ENCODE measurements at regions of chr12 and their contacts with region 1.

Region 1: DNA sequence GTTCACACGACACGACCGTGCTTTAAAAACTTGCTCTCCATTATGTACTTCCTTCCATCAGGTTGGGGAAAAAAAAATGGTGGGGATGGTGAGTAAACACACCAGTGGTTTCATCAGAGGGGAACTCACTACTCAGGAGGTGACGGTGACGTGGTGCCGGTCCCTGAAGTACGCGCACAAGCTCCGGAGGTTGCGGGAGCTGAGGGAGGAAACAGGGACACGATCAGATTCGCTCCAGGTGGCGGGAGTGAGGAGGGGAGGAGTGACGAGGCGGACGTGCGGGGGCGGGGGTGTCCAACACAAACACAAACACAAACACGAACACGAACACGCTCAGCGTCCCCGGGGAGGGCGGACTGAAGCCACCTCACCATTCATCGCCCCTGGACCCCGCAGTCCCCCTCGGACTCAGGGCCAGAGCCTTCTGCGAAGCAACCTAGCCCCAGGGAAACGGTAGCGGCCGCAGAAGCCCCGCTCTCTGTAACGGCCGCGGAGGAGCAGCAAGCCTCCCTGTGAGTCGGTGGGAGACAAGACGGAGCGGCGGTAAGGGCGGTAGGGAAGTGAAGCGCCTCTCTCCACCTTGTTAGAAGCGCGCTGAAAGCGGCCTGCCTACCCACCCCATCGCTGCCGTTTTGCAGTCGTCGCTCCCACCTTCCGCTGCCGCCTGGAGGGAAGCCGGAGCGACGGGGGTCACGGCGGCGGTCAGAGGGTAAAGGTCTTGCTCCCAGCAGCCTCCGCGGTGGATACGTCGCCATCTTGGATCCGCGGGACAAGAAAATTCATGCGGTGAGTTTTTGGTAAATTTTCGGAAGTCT is at the start of gene CNOT2:
- DNase-seq: peak; percentile 82 to 95 (median 88)
- ATAC-seq: peak; percentile 80
- H3K4me3 ChIP-seq: peak within 1 kb of the TSS; percentile 88
- H3K4me3 Mint-ChIP-seq: peak within 1 kb of the TSS; percentile 99
- H3K27ac ChIP-seq: peak within 1 kb of the TSS; percentile 96 to 98
- H3K27ac Mint-ChIP-seq: peak within 1 kb of the TSS; percentile 97
- H3K4me1 ChIP-seq: peaks cover 12% of the 10 kb centered on the region
- H3K4me1 Mint-ChIP-seq: peaks cover 76% of the 10 kb centered on the region
- H3K27me3 ChIP-seq: no peaks in the 10 kb centered on the region
- H3K27me3 Mint-ChIP-seq: no peaks in the 10 kb centered on the region
- CTCF ChIP-seq: no peak
- total RNA-seq, gene CNOT2: 107 to 121 TPM

Region 2: GRCh38 chr12:69738351-69739286 is 504.3 kb before region 1 on chr12 and contains the start of gene RAB3IP:
- CTCF ChIA-PET with region 1: no interaction called
- POLR2A ChIA-PET with region 1: interaction called, 6 read pairs
- intact Hi-C with region 1: loop called in 1 of 2 experiments (anchors 2 kb)
- DNase-seq: peak; percentile 84 to 98 (median 92)
- ATAC-seq: peak; percentile 84
- H3K4me3 ChIP-seq: peak within 1 kb of the TSS; percentile 82
- H3K4me3 Mint-ChIP-seq: peak within 1 kb of the TSS; percentile 86
- H3K27ac ChIP-seq: peak within 1 kb of the TSS; percentile 48 to 68
- H3K27ac Mint-ChIP-seq: peak within 1 kb of the TSS; percentile 80
- H3K4me1 ChIP-seq: peaks cover 11% of the 10 kb centered on the region
- H3K4me1 Mint-ChIP-seq: peaks cover 27% of the 10 kb centered on the region
- H3K27me3 ChIP-seq: no peaks in the 10 kb centered on the region
- H3K27me3 Mint-ChIP-seq: peaks cover 6% of the 10 kb centered on the region
- CTCF ChIP-seq: peak; percentile 75
- total RNA-seq, gene RAB3IP: 15.2 to 19.6 TPM

Region 3: GRCh38 chr12:70032076-70032475 is 210.8 kb before region 1 on chr12:
- CTCF ChIA-PET with region 1: no interaction called
- POLR2A ChIA-PET with region 1: no interaction called
- intact Hi-C with region 1: no loop called
- DNase-seq: no peak
- ATAC-seq: no peak
- H3K4me3 ChIP-seq: no peak overlapping the region
- H3K4me3 Mint-ChIP-seq: no peak overlapping the region
- H3K27ac ChIP-seq: no peak overlapping the region
- H3K27ac Mint-ChIP-seq: no peak overlapping the region
- H3K4me1 ChIP-seq: no peaks in the 10 kb centered on the region
- H3K4me1 Mint-ChIP-seq: no peaks in the 10 kb centered on the region
- H3K27me3 ChIP-seq: no peaks in the 10 kb centered on the region
- H3K27me3 Mint-ChIP-seq: no peaks in the 10 kb centered on the region
- CTCF ChIP-seq: no peak

Region 4: DNA sequence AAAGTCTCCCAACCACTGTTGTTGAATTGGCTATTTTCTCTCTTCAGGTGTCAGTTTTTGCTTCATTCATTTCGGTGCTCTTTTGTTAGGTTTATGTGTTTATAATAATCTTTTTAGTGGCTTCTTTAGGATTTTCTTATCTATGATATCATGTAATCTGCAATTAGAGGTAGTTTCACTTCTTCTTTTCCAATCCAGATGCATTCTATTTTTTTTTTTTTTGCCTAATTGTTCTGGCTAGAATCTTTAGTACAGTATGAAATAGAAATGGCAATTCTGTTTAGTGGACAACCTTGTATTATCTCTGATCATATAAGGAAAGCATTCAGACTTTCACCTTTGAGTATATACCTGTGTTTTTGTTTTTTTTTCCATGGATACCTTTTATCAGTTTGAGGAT is 17.7 kb after region 1 on chr12:
- CTCF ChIA-PET with region 1: no interaction called
- POLR2A ChIA-PET with region 1: interaction called, 3 read pairs
- intact Hi-C with region 1: loop called in 1 of 2 experiments (anchors 1 kb)
- DNase-seq: no peak
- ATAC-seq: no peak
- H3K4me3 ChIP-seq: no peak overlapping the region
- H3K4me3 Mint-ChIP-seq: no peak overlapping the region
- H3K27ac ChIP-seq: no peak overlapping the region
- H3K27ac Mint-ChIP-seq: peak overlapping the region; percentile 58
- H3K4me1 ChIP-seq: peaks cover 9% of the 10 kb centered on the region
- H3K4me1 Mint-ChIP-seq: peaks cover 83% of the 10 kb centered on the region
- H3K27me3 ChIP-seq: no peaks in the 10 kb centered on the region
- H3K27me3 Mint-ChIP-seq: no peaks in the 10 kb centered on the region
- CTCF ChIP-seq: no peak

Region 5: GRCh38 chr12:70309348-70309747 is 66.4 kb after region 1 on chr12:
- CTCF ChIA-PET with region 1: interaction called, 3 read pairs
- POLR2A ChIA-PET with region 1: interaction called, 10 read pairs
- intact Hi-C with region 1: no loop called
- DNase-seq: no peak
- ATAC-seq: no peak
- H3K4me3 ChIP-seq: no peak overlapping the region
- H3K4me3 Mint-ChIP-seq: no peak overlapping the region
- H3K27ac ChIP-seq: no peak overlapping the region
- H3K27ac Mint-ChIP-seq: no peak overlapping the region
- H3K4me1 ChIP-seq: peaks cover 10% of the 10 kb centered on the region
- H3K4me1 Mint-ChIP-seq: peaks cover 76% of the 10 kb centered on the region
- H3K27me3 ChIP-seq: no peaks in the 10 kb centered on the region
- H3K27me3 Mint-ChIP-seq: no peaks in the 10 kb centered on the region
- CTCF ChIP-seq: no peak

Region 6: GRCh38 chr12:70365648-70366518 is 123.0 kb after region 1 on chr12 and contains the start of gene KCNMB4:
- CTCF ChIA-PET with region 1: no interaction called
- POLR2A ChIA-PET with region 1: interaction called, 32 read pairs
- intact Hi-C with region 1: loop called (anchors 2 kb)
- DNase-seq: peak; percentile 43 to 87 (median 64)
- ATAC-seq: peak; percentile 70
- H3K4me3 ChIP-seq: peak within 1 kb of the TSS; percentile 81
- H3K4me3 Mint-ChIP-seq: peak within 1 kb of the TSS; percentile 96
- H3K27ac ChIP-seq: peak within 1 kb of the TSS; percentile 18 to 36
- H3K27ac Mint-ChIP-seq: peak within 1 kb of the TSS; percentile 77
- H3K4me1 ChIP-seq: peaks cover 18% of the 10 kb centered on the region
- H3K4me1 Mint-ChIP-seq: peaks cover 33% of the 10 kb centered on the region
- H3K27me3 ChIP-seq: peaks cover 0 to 7% of the 10 kb centered on the region in 2 experiments
- H3K27me3 Mint-ChIP-seq: peaks cover 5% of the 10 kb centered on the region
- CTCF ChIP-seq: no peak
- total RNA-seq, gene KCNMB4: 0.53 to 0.71 TPM

Region 7: GRCh38 chr12:71763677-71764379 is 1520.9 kb after region 1 on chr12:
- CTCF ChIA-PET with region 1: no interaction called
- POLR2A ChIA-PET with region 1: no interaction called
- intact Hi-C with region 1: loop called in 1 of 2 experiments (anchors 10 kb)
- DNase-seq: no peak
- ATAC-seq: no peak
- H3K4me3 ChIP-seq: no peak overlapping the region
- H3K4me3 Mint-ChIP-seq: no peak overlapping the region
- H3K27ac ChIP-seq: no peak overlapping the region
- H3K27ac Mint-ChIP-seq: no peak overlapping the region
- H3K4me1 ChIP-seq: peaks cover 3% of the 10 kb centered on the region
- H3K4me1 Mint-ChIP-seq: peaks cover 79% of the 10 kb centered on the region
- H3K27me3 ChIP-seq: no peaks in the 10 kb centered on the region
- H3K27me3 Mint-ChIP-seq: no peaks in the 10 kb centered on the region
- CTCF ChIP-seq: no peak

Region 8: GRCh38 chr12:71840231-71840847 is 1597.4 kb after region 1 on chr12:
- CTCF ChIA-PET with region 1: no interaction called
- POLR2A ChIA-PET with region 1: interaction called, 5 read pairs
- intact Hi-C with region 1: loop called in 1 of 2 experiments (anchors 10 kb)
- DNase-seq: peak in 7 of 14 experiments; percentile 8 to 58 (median 27)
- ATAC-seq: peak; percentile 20
- H3K4me3 ChIP-seq: peak overlapping the region; percentile 75
- H3K4me3 Mint-ChIP-seq: peak overlapping the region; percentile 97
- H3K27ac ChIP-seq: peak overlapping the region; percentile 97 to 99
- H3K27ac Mint-ChIP-seq: peak overlapping the region; percentile 95
- H3K4me1 ChIP-seq: peaks cover 24% of the 10 kb centered on the region
- H3K4me1 Mint-ChIP-seq: peaks cover 45% of the 10 kb centered on the region
- H3K27me3 ChIP-seq: no peaks in the 10 kb centered on the region
- H3K27me3 Mint-ChIP-seq: peaks cover under 1% of the 10 kb centered on the region
- CTCF ChIP-seq: no peak